ENCODE measurements at regions of chr4 and their contacts with region 1.

Region 1: GRCh38 chr4:102449751-102450352 is 51.3 kb upstream of the NFKB1 start:
- DNase-seq: no peak
- ATAC-seq: peak; percentile 64 to 86 (median 70)
- H3K4me3 ChIP-seq: no peak overlapping the region
- H3K27ac ChIP-seq: no peak overlapping the region
- H3K4me1 ChIP-seq: no peaks in the 10 kb centered on the region
- H3K27me3 ChIP-seq: no peaks in the 10 kb centered on the region
- CTCF ChIP-seq: peak; percentile 66

Region 2: GRCh38 chr4:102104278-102104677 is 345.6 kb before region 1 on chr4:
- intact Hi-C with region 1: no loop called
- DNase-seq: no peak
- ATAC-seq: no peak
- H3K4me3 ChIP-seq: no peak overlapping the region
- H3K27ac ChIP-seq: no peak overlapping the region
- H3K4me1 ChIP-seq: no peaks in the 10 kb centered on the region
- H3K27me3 ChIP-seq: no peaks in the 10 kb centered on the region
- CTCF ChIP-seq: no peak

Region 3: GRCh38 chr4:102493794-102494193 is 43.9 kb after region 1 on chr4:
- intact Hi-C with region 1: loop called in 1 of 2 experiments (anchors 5 kb)
- DNase-seq: no peak
- ATAC-seq: no peak
- H3K4me3 ChIP-seq: no peak overlapping the region
- H3K27ac ChIP-seq: no peak overlapping the region
- H3K4me1 ChIP-seq: no peaks in the 10 kb centered on the region
- H3K27me3 ChIP-seq: no peaks in the 10 kb centered on the region
- CTCF ChIP-seq: no peak

Region 4: GRCh38 chr4:102610007-102610406 is 160.2 kb after region 1 on chr4:
- intact Hi-C with region 1: loop called in 1 of 2 experiments (anchors 10 kb)
- DNase-seq: no peak
- ATAC-seq: no peak
- H3K4me3 ChIP-seq: no peak overlapping the region
- H3K27ac ChIP-seq: no peak overlapping the region
- H3K4me1 ChIP-seq: no peaks in the 10 kb centered on the region
- H3K27me3 ChIP-seq: no peaks in the 10 kb centered on the region
- CTCF ChIP-seq: peak; percentile 7

Region 5: GRCh38 chr4:102620697-102621497 is 171.0 kb after region 1 on chr4:
- intact Hi-C with region 1: loop called (anchors 5 to 10 kb)
- DNase-seq: no peak
- ATAC-seq: peak; percentile 92 to 96 (median 93)
- H3K4me3 ChIP-seq: peak overlapping the region; percentile 16
- H3K27ac ChIP-seq: no peak overlapping the region
- H3K4me1 ChIP-seq: peaks cover 8% of the 10 kb centered on the region
- H3K27me3 ChIP-seq: no peaks in the 10 kb centered on the region
- CTCF ChIP-seq: peak; percentile 62

Region 6: DNA sequence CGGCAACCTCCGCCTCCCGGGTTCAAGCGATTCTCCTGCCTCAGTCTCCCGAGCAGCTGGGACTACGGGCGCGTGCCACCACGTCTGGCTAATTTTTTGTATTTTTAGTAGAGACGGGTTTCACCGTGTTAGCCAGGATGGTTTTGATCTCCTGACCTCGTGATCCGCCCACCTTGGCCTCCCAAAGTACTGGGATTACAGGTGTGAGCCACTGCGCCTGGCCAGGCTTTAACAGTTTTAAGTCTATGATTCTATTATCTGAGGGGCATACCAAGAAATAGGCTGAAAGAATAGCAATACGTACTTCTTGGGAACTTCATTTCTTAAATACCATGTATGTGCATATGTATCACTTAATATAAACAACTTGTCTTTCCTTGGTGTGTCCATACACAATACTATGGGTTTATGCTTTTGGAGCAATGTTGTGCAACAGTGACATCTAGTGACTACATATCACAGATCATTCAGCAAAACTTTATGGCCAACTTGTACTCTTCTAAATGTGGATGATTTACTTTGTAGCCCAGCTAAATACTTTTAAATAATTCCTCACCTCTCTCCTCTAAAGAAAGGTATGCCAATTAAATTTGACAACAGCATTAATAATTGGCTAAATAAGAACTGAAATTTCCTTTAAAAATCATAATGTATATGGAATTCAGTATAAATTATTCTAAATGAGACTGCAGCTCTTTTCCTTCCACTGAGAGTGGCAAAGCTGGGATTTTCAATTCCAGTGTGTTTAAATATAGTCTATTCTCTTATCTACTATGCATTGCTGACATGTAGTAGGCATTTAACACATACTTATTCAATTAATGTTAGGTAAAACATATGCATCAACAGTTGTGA is 559.2 kb after region 1 on chr4:
- intact Hi-C with region 1: loop called (anchors 5 kb)
- DNase-seq: no peak
- ATAC-seq: peak; percentile 77 to 92 (median 82)
- H3K4me3 ChIP-seq: no peak overlapping the region
- H3K27ac ChIP-seq: no peak overlapping the region
- H3K4me1 ChIP-seq: peaks cover 14% of the 10 kb centered on the region
- H3K27me3 ChIP-seq: no peaks in the 10 kb centered on the region
- CTCF ChIP-seq: peak; percentile 78